ENCODE measurements at regions of chr2 and their contacts with region 1.

Region 1: DNA sequence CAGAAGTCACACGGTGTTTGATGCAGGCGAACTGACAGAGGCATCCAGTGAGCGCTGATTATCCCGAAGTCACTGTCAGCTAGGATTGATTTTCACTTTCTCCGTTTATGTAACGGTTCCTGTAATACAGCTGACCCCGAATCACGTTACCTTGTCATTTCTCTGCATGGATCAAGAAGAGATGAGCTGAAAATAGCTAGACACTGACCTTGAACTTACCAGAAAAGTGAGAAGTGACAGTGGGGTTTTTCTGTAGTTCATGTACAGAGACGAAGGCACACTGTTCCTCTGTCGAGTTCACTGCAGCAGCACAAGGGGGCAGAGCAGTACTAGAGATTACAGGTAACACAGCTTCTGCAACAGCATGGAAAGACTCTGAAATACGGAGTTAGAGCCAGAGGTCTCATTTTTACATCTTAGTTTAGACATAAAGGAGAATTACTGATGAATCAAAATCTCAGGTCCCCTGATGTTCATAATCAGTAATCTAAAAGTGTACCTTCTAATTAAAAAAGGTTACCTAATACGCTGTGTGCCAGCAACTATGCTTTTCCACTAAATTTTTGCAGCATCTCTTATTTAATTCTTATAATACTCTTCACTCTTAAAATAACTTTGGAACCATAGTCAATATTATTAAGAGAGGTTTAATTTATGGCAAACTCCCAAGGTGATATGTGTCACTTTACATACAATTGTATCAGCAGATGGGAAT is 33.1 kb downstream of the ARHGAP15 start:
- DNase-seq: peak; percentile 84
- H3K4me3 Mint-ChIP-seq: no peak overlapping the region
- H3K27ac Mint-ChIP-seq: peak overlapping the region; percentile 15
- H3K4me1 Mint-ChIP-seq: peaks cover 59% of the 10 kb centered on the region
- H3K27me3 Mint-ChIP-seq: no peaks in the 10 kb centered on the region

Region 2: DNA sequence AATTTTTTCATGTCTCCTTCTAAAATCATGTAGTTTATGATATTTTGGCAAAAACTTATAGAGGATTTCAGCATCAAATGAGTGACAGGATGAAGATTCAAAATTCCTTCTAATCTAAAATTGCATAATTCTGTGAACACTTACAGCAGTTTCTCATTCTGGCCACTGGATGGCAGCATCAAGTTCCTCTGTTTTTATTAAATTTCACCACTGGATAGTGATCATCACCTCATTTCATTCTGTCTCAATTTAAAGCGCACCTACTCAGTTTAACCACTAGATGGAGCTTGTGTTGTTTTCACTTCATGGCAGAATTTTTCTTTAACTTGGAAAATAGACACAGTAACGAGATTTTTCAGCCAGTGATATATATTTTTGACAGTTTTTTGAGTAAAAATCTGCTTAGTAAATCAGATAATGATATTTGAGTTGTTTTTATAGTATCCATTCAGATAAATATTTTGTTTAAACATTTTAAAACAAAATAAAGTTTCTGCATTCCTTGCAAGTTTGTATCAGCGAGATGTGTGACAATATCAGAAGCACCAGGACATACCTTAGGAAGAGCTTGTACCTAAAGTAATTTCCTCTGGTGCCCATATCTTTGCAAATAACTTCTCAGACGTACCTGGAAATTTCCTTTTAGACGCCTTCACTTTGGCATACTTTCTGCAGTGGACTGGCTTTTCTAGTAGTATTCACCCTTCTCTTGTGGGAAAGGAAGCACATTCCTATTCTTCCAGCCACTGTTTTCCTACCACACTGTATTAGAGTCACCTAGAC is 127.8 kb before region 1 on chr2:
- intact Hi-C with region 1: loop called (anchors 2 kb)
- DNase-seq: peak; percentile 88
- H3K4me3 Mint-ChIP-seq: no peak overlapping the region
- H3K27ac Mint-ChIP-seq: no peak overlapping the region
- H3K4me1 Mint-ChIP-seq: peaks cover 11% of the 10 kb centered on the region
- H3K27me3 Mint-ChIP-seq: peaks cover 3% of the 10 kb centered on the region

Region 3: GRCh38 chr2:143083636-143084035 is 78.6 kb before region 1 on chr2:
- intact Hi-C with region 1: no loop called
- DNase-seq: no peak
- H3K4me3 Mint-ChIP-seq: peak overlapping the region; percentile 28
- H3K27ac Mint-ChIP-seq: peak overlapping the region; percentile 48
- H3K4me1 Mint-ChIP-seq: peaks cover 27% of the 10 kb centered on the region
- H3K27me3 Mint-ChIP-seq: peaks cover 5% of the 10 kb centered on the region

Region 4: GRCh38 chr2:143150287-143150686 is 12.0 kb before region 1 on chr2:
- intact Hi-C with region 1: loop called (anchors 1 kb)
- DNase-seq: no peak
- H3K4me3 Mint-ChIP-seq: peak overlapping the region; percentile 63
- H3K27ac Mint-ChIP-seq: peak overlapping the region; percentile 87
- H3K4me1 Mint-ChIP-seq: peaks cover 68% of the 10 kb centered on the region
- H3K27me3 Mint-ChIP-seq: no peaks in the 10 kb centered on the region

Region 5: GRCh38 chr2:143217512-143218115 is 55.3 kb after region 1 on chr2:
- intact Hi-C with region 1: loop called (anchors 1 kb)
- DNase-seq: no peak
- H3K4me3 Mint-ChIP-seq: no peak overlapping the region
- H3K27ac Mint-ChIP-seq: peak overlapping the region; percentile 79
- H3K4me1 Mint-ChIP-seq: peaks cover 40% of the 10 kb centered on the region
- H3K27me3 Mint-ChIP-seq: no peaks in the 10 kb centered on the region